ENCODE measurements at regions of chr1 and their contacts with region 1.

Region 1: DNA sequence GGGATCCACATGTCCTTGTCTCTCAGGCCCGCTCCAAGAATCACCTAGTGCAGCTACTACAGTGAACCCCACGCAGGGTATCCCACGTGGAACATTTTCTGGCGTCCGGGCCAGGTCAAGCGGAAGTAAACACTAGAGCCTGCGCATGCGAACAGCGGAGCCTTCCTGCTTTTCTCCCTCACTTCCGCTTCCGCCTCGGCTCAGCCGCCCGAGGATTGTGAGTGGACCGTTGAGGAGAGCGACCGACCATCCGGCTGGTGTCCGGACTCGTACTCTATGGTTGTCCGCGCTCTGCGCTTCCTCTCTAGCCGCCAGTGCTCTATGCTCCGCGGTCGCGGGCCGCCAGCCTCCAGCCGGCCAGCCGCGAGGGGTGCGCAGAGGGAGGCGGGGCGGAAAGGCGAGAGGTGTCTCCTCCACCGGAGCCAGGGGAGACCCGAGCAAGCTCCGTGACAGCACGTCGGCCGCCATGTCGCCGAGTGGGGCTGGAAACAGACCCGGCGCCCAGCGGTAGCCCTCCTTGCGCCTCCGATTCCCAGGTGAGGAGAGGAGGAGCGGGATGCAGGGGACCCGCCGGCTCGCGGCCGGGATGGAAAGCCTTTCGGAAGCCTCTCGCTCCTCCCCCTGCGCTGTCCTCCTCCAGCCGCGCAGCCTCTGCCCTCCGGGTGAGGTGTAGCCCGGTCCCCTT is at the starts of genes CNST and TFB2M:
- DNase-seq: peak; percentile 99
- H3K4me3 ChIP-seq: peak within 1 kb of the TSS; percentile 75 to 99 (median 92)
- H3K27ac ChIP-seq: peak within 1 kb of the TSS; percentile 91 to 100 (median 98)
- H3K4me1 ChIP-seq: peaks cover 49 to 60% (median 57%) of the 10 kb centered on the region in 4 donors
- H3K27me3 ChIP-seq: no peaks in the 10 kb centered on the region
- CTCF ChIP-seq: no peak
- EP300 ChIP-seq: no peak
- POLR2A ChIP-seq: peak; percentile 88
- total RNA-seq, gene CNST: 55.4 to 74.7 (median 61.9) TPM
- total RNA-seq, gene TFB2M: 9.1 to 12.9 (median 11.4) TPM

Region 2: DNA sequence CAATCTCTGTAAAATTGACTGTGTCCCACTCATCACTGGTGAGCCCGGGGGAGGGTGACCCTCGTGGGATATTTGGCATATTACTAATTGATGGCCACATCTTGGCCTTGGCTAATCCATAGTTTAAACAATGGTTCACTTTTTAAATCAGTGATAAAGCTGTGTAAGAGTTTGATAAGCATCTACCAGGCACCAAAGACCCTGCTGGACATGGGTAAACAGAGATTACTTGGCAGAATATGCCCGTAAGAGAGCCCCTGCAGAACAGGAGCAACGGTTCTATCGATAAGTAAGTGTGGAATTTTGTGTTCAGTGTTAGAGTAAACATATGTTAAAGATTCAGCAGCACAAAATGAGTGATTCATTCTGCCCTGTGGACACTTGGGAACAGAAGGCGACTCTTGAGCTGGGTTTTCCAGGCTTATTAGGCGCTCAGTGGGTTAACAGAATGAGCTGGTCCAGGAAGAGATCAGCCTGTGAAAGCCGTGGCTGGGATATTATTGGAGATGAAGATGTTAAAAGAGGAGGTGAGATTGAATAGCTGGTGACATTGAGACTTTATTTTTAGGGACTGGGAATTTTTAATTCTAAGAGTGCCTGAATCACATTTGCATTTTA is 55.9 kb after region 1 on chr1:
- intact Hi-C with region 1: loop called (anchors 5 kb)
- DNase-seq: no peak
- H3K4me3 ChIP-seq: no peak overlapping the region
- H3K27ac ChIP-seq: peak overlapping the region; percentile 18 to 60 (median 56)
- H3K4me1 ChIP-seq: peaks cover 9 to 50% (median 43%) of the 10 kb centered on the region in 4 donors
- H3K27me3 ChIP-seq: no peaks in the 10 kb centered on the region
- CTCF ChIP-seq: no peak
- EP300 ChIP-seq: no peak
- POLR2A ChIP-seq: no peak

Region 3: DNA sequence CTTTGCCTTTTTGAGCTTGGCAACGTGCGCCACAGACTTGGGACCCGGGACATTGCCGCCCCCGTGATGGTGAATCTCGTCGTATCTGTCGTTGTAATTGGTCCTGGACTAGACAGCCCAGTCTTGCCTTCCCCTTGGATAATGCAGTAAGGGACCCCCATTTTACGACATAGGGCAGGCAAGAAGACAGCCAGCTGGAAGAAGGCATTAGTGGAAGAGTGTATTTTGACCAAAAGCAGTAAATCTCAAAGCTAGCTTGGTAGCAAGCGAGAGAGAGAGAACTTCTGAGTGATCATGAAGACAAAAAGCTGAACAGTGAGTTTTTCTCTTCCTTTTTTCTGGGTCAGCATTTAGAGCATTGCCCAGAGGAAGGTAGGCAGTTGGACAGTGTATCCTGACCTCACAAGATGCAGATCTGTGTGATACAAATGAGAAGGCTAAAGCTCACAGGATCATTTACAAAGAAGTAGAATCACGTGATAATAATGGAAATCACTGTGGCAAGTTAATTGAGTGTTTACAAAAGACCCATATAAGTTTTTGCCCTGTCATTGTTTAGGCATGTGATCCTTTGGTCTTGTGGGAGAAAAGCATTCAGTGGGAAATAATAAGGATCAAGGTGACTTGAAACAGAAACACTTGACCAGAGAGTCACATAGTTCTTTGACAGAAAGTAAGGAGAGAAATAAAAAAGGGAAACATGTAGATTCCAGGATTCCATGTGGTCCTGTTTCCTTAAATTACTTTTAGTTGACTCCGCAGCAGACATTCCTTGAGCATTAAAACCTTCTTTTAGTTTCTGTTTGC is 66.2 kb after region 1 on chr1:
- intact Hi-C with region 1: loop called (anchors 2 kb)
- DNase-seq: no peak
- H3K4me3 ChIP-seq: peak overlapping the region in 1 of 4 donors; percentile 18
- H3K27ac ChIP-seq: peak overlapping the region; percentile 59 to 81 (median 76)
- H3K4me1 ChIP-seq: peaks cover 5 to 55% (median 35%) of the 10 kb centered on the region in 4 donors
- H3K27me3 ChIP-seq: no peaks in the 10 kb centered on the region
- CTCF ChIP-seq: no peak
- EP300 ChIP-seq: no peak
- POLR2A ChIP-seq: no peak

Region 4: GRCh38 chr1:246647113-246647512 is 80.8 kb after region 1 on chr1:
- intact Hi-C with region 1: loop called (anchors 5 kb)
- DNase-seq: no peak
- H3K4me3 ChIP-seq: peak overlapping the region; percentile 19 to 38 (median 34)
- H3K27ac ChIP-seq: peak overlapping the region; percentile 62 to 76 (median 72)
- H3K4me1 ChIP-seq: peaks cover 18 to 50% (median 44%) of the 10 kb centered on the region in 4 donors
- H3K27me3 ChIP-seq: no peaks in the 10 kb centered on the region
- CTCF ChIP-seq: peak; percentile 52 to 77 (median 64)
- EP300 ChIP-seq: no peak
- POLR2A ChIP-seq: no peak

Region 5: GRCh38 chr1:246699095-246699735 is 132.9 kb after region 1 on chr1:
- intact Hi-C with region 1: loop called (anchors 2 kb)
- DNase-seq: peak; percentile 95
- H3K4me3 ChIP-seq: peak overlapping the region; percentile 35 to 54 (median 40)
- H3K27ac ChIP-seq: peak overlapping the region; percentile 30 to 70 (median 54)
- H3K4me1 ChIP-seq: peaks cover 7 to 19% (median 14%) of the 10 kb centered on the region in 4 donors
- H3K27me3 ChIP-seq: no peaks in the 10 kb centered on the region
- CTCF ChIP-seq: peak; percentile 78 to 87 (median 85)
- EP300 ChIP-seq: no peak
- POLR2A ChIP-seq: no peak

Region 6: GRCh38 chr1:246753670-246754535 is 187.6 kb after region 1 on chr1:
- intact Hi-C with region 1: loop called (anchors 10 kb)
- DNase-seq: no peak
- H3K4me3 ChIP-seq: no peak overlapping the region
- H3K27ac ChIP-seq: no peak overlapping the region
- H3K4me1 ChIP-seq: peaks cover 0 to 7% (median 3%) of the 10 kb centered on the region in 4 donors
- H3K27me3 ChIP-seq: no peaks in the 10 kb centered on the region
- CTCF ChIP-seq: peak; percentile 60 to 83 (median 64)
- EP300 ChIP-seq: no peak
- POLR2A ChIP-seq: no peak